Left lung (tissue), 14 donors: ENCODE measurements at regions of chr9 and their contacts with region 1.

Region 1: DNA sequence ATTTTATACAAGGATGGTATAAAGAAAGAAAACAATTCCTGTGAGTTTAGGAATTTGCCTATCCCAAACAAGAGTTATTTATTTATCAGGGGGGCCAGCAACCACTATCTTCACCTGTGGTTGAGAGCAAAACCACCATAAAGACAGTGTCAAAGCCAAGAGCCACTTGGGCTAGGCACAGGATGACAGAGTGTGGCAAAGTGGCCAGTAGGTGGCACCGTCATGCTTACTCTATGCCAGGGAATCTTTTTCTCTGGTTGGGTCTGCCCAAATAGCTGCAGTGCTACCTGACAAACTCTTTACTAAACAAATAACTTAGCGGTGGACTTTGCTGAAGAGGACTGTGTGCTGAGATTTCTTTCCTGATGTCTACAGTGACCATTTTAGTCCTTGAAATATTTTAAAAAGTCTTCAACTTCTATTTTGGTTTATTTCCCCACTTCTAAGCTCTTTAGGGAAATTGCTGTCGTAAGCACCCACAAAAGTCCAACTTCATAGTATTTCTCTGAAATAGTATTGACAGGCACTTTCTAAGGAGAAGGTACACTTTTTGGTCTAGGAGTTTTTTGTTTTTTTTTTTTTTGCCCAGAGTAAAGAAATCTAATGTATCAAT is 285.0 kb downstream of the RFX3 start:
- DNase-seq: peak in 3 of 4 donors; percentile 15 to 68 (median 67)
- ATAC-seq: peak; percentile 99
- H3K4me3 ChIP-seq: no peak overlapping the region
- H3K27ac ChIP-seq: no peak overlapping the region
- H3K4me1 ChIP-seq: peaks cover 0 to 11% of the 10 kb centered on the region in 2 donors
- H3K27me3 ChIP-seq: no peaks in the 10 kb centered on the region
- CTCF ChIP-seq: peak; percentile 59 to 74

Region 2: DNA sequence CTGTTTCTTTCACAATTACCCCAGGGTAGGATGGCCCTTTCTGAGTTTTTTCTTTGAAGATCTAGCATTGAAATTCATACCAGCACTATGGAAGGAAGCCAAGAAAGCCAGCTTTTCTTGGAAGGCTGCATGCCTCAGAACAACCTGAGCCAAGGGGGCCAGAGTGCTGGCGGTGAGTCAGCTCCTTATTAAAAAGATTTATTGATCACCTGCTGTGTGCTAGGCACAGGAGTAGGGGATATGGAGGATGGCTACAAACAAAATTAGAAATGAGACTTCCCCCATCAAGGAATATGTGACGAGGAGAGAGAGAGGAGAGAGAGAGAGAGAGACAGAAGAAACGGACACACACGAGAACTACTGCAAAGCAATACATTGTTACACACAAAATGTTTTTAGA is 212.2 kb before region 1 on chr9:
- intact Hi-C with region 1: no loop called
- DNase-seq: no peak
- ATAC-seq: no peak
- H3K4me3 ChIP-seq: no peak overlapping the region
- H3K27ac ChIP-seq: no peak overlapping the region
- H3K4me1 ChIP-seq: no peaks in the 10 kb centered on the region
- H3K27me3 ChIP-seq: no peaks in the 10 kb centered on the region
- CTCF ChIP-seq: no peak

Region 3: GRCh38 chr9:3088166-3088702 is 152.5 kb before region 1 on chr9:
- intact Hi-C with region 1: no loop called
- DNase-seq: no peak
- ATAC-seq: no peak
- H3K4me3 ChIP-seq: no peak overlapping the region
- H3K27ac ChIP-seq: no peak overlapping the region
- H3K4me1 ChIP-seq: no peaks in the 10 kb centered on the region
- H3K27me3 ChIP-seq: no peaks in the 10 kb centered on the region
- CTCF ChIP-seq: no peak

Region 4: DNA sequence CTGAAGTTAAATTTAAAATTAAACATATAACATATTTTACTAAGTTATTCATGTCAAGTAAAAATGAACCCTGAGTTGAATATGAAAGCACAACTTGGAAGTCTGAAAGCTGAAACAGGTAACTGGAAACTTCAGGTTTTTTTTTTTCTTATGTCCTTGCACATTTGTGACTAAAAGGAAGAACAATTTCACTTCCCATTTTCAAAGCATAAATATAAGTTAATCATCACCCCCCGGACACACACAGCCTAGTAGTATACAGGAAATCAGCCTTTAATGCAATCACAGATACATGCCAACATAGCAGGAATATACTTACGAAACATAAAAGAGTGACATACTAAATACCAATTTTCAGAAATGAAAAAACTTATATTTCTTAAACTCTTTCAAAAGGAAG is 59.1 kb after region 1 on chr9:
- intact Hi-C with region 1: no loop called
- DNase-seq: no peak
- ATAC-seq: no peak
- H3K4me3 ChIP-seq: no peak overlapping the region
- H3K27ac ChIP-seq: no peak overlapping the region
- H3K4me1 ChIP-seq: no peaks in the 10 kb centered on the region
- H3K27me3 ChIP-seq: no peaks in the 10 kb centered on the region
- CTCF ChIP-seq: no peak

Region 5: GRCh38 chr9:3441197-3441816 is 200.5 kb after region 1 on chr9:
- intact Hi-C with region 1: loop called in 1 of 2 experiments (anchors 10 kb)
- DNase-seq: peak in 2 of 4 donors; percentile 28 to 36
- ATAC-seq: peak; percentile 96
- H3K4me3 ChIP-seq: no peak overlapping the region
- H3K27ac ChIP-seq: no peak overlapping the region
- H3K4me1 ChIP-seq: no peaks in the 10 kb centered on the region
- H3K27me3 ChIP-seq: no peaks in the 10 kb centered on the region
- CTCF ChIP-seq: peak; percentile 58 to 59

Region 6: DNA sequence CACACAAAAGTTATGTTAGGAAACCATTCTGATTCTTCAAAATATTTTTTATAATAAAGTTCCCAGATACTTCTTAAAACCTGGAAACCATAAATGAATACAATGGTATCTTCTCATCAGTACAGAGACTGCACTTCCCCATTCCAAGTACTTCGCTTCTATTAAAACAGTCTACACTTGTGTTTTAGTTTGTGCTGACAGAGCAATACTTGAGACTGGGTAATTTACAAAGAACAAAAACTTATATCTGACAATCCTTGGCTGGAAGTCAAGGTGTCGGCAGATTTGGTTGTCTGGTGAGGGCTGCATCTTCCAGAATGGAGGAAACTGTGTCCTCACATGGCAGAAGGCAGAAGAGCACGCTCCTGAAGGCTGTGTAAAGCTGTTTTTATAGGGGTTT is 215.0 kb after region 1 on chr9:
- intact Hi-C with region 1: no loop called
- DNase-seq: peak in 1 of 4 donors; percentile 10
- ATAC-seq: peak; percentile 36
- H3K4me3 ChIP-seq: no peak overlapping the region
- H3K27ac ChIP-seq: no peak overlapping the region
- H3K4me1 ChIP-seq: no peaks in the 10 kb centered on the region
- H3K27me3 ChIP-seq: no peaks in the 10 kb centered on the region
- CTCF ChIP-seq: no peak